ENCODE measurements at regions of chr3 and their contacts with region 1.

Region 1: DNA sequence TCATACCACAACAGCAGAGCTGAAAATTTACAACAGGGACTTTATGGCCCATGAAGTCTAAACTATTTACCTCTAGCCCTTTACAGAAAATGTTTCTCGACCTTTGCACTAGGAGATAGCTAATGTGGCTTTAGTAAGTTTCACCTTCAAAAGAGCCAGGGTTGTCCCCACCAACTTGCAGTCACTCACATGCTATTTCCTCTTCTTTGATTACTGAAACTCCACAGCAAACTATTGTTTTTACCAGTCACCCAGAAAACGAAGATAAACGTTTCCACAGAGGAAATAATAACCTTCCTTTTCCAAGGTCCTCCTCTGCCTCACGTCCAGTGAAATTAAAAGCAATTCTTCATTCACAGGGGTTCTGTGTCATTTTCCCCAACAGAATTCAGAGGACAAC is 48.2 kb downstream of the WWTR1 start:
- DNase-seq: no peak
- ATAC-seq: no peak
- H3K4me3 ChIP-seq: no peak overlapping the region
- H3K27ac ChIP-seq: no peak overlapping the region
- H3K4me1 ChIP-seq: peaks cover 19% of the 10 kb centered on the region
- H3K27me3 ChIP-seq: no peaks in the 10 kb centered on the region
- CTCF ChIP-seq: no peak

Region 2: GRCh38 chr3:149646181-149646766 is 36.7 kb after region 1 on chr3:
- intact Hi-C with region 1: loop called in 1 of 2 experiments (anchors 5 kb)
- DNase-seq: no peak
- ATAC-seq: peak in 1 of 4 donors; percentile 49
- H3K4me3 ChIP-seq: no peak overlapping the region
- H3K27ac ChIP-seq: no peak overlapping the region
- H3K4me1 ChIP-seq: peaks cover 30% of the 10 kb centered on the region
- H3K27me3 ChIP-seq: no peaks in the 10 kb centered on the region
- CTCF ChIP-seq: no peak

Measured in psoas muscle (tissue), 8 donors.